Astrocyte of the cerebellum (primary cell): ENCODE measurements at regions of chr6 and their contacts with region 1.

Region 1: DNA sequence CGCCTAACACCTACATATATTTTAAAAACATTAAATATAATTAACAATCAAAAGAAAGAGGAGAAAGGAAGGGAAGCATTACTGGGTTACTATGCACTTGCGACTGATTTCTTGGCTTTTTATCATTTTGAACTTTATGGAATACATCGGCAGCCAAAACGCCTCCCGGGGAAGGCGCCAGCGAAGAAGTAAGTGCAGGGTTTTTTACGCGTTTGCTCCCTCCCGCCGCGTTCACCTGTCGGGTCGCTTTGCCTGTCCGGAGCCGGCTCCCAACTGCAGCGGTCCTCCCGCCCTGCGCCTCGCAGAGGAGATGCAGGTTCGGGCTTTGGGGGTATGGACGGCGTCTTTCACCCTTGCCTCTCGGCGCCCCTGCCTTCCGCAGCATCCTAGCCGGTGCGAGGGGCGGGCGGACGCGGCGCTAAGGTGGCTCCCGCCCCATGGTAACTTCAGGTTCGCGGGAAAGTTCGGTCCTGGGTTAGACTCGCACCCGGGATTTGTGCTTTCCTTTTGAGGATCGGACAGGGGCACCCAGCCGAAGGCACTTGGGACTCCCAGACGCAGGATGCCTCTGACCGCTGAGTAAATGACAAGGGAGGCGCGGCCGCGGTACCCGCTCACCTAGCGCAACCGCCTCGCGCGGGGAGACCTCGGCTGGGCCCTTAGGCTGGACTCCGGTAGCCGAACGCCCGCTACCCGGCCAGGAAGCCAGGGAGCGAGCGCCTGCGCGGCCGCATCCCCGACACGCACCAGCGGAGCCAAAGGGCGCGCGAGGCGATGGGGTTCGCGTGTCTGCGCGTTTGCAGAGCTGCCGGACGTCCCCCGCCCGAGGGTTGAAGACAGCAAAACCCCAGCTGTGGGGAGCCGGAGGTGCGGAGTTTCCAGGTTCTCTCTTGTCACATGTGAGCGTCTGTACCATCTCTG is 891 bp downstream of the RSPO3 start:
- DNase-seq: no peak
- H3K4me3 ChIP-seq: peak overlapping the region; percentile 51
- CTCF ChIP-seq: no peak

Region 2: DNA sequence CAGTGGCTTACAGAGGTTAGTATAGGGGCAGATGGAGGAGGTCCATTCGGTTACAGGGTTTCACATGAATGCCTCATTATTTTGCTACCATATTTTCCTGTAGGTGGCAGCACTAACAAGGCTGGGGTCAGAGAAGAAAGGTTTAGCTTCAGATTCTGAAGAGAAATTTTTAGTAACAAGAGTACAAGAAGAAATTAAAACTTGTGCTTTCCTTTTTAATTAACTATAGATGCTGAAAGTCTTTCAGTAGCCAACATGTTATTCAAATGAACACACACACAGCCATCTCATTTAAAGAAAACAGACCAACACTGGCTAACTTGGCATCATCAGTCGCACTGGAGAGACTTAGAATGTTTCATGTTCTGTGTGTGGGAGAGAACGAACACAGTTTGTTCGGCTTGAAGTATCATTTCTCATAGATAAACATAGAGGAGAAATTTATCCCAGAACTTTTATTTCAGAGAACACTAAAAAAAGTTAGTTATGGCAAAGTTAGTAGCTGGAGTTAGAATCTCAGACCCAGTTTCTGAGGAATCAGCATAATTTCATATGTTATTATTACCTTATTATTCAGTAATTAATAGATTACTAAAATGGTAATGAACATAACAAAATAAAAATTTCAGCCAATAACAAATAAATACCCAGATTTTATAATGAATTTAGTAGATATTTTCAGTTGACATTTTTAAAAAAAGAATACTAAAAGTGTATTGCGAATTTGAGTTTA is 314.9 kb before region 1 on chr6:
- in situ Hi-C with region 1: loop called (anchors 10 kb)
- DNase-seq: peak; percentile 39
- H3K4me3 ChIP-seq: no peak overlapping the region
- CTCF ChIP-seq: peak; percentile 77